WTC11 (cell line): ENCODE measurements at regions of chr14 and their contacts with region 1.

Region 1: DNA sequence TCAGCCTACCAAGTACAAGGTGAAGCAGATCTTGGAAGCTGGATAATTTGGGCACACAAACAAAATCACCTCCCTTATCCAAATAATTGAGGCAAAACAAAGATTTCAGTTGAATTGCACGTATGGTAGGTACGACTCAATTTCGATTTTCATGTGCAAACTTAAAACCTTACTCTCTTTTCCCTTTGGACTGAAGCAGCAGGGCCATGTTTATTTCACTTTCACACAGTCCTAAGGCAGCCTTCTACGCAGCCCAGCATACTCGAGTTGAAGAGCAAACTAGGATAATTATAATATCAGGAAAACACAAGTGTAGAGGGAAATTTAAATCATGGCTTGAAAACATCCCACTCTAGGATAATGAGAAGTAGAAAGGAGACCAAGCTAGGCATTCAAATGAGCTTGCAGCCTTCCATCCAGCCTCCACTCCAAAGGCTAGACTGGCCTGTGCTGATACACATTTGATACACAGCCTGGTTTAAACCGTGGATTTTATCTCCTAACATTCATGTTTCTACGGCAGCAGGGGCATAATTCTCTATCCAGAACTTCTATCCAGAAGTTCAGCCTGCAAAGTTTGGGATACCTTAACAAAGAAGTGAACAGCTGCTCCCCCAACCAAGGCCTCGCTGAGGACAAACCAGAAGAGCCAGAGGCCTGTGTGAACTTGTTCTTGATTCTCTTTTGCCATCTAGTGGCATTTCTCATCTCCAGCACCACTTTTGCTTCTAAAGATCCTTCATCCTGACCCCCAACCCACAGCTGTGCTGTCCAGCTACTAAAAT is 2.4 kb upstream of the RNASE7 start:
- DNase-seq: peak; percentile 33
- ATAC-seq: peak; percentile 74
- H3K4me3 Mint-ChIP-seq: peak overlapping the region; percentile 25
- H3K27ac Mint-ChIP-seq: peak overlapping the region; percentile 72; the same call in 1 of the 2 replicates
- H3K4me1 Mint-ChIP-seq: peaks cover 26% of the 10 kb centered on the region
- H3K27me3 Mint-ChIP-seq: peaks cover 3% of the 10 kb centered on the region; the same call in 1 of the 2 replicates
- CTCF ChIP-seq: 0 out of 2 replicates have a peak, but pooled peaks have one; percentile 25

Region 2: GRCh38 chr14:20757965-20758364 is 281.8 kb before region 1 on chr14:
- CTCF ChIA-PET with region 1: interaction called, 12 read pairs
- POLR2A ChIA-PET with region 1: no interaction called
- DNase-seq: peak; percentile 57
- ATAC-seq: peak; percentile 76
- H3K4me3 Mint-ChIP-seq: no peak overlapping the region
- H3K27ac Mint-ChIP-seq: no peak overlapping the region
- H3K4me1 Mint-ChIP-seq: peaks cover 26% of the 10 kb centered on the region
- H3K27me3 Mint-ChIP-seq: peaks cover 4% of the 10 kb centered on the region
- CTCF ChIP-seq: 0 out of 2 replicates have a peak, but pooled peaks have one; percentile 28

Region 3: GRCh38 chr14:20998664-20999366 is 41.0 kb before region 1 on chr14 and contains the start of gene SLC39A2:
- CTCF ChIA-PET with region 1: interaction called, 37 read pairs
- POLR2A ChIA-PET with region 1: no interaction called
- DNase-seq: peak; percentile 63
- ATAC-seq: peak; percentile 90
- H3K4me3 Mint-ChIP-seq: peak within 1 kb of the TSS; percentile 32
- H3K27ac Mint-ChIP-seq: peak within 1 kb of the TSS; percentile 55
- H3K4me1 Mint-ChIP-seq: peaks cover 18% of the 10 kb centered on the region
- H3K27me3 Mint-ChIP-seq: no peaks in the 10 kb centered on the region; the same call in 1 of the 2 replicates
- CTCF ChIP-seq: no peak
- total RNA-seq, gene SLC39A2: 0.14 TPM in 1 of 3 replicates, not detected in the others

Region 4: GRCh38 chr14:21024585-21025370 is 15.0 kb before region 1 on chr14 and contains the start of gene NDRG2:
- CTCF ChIA-PET with region 1: interaction called, 41 read pairs
- POLR2A ChIA-PET with region 1: interaction called, 7 read pairs
- DNase-seq: peak; percentile 92
- ATAC-seq: peak; percentile 74
- H3K4me3 Mint-ChIP-seq: peak within 1 kb of the TSS; percentile 93
- H3K27ac Mint-ChIP-seq: peak within 1 kb of the TSS; percentile 99
- H3K4me1 Mint-ChIP-seq: peaks cover 39% of the 10 kb centered on the region
- H3K27me3 Mint-ChIP-seq: peaks cover 35% of the 10 kb centered on the region
- CTCF ChIP-seq: no peak
- total RNA-seq, gene NDRG2: 28.5 to 32.2 TPM (median 30.1 TPM) in 3 replicates

Region 5: GRCh38 chr14:21071225-21072030 is 31.7 kb after region 1 on chr14:
- CTCF ChIA-PET with region 1: interaction called, 45 read pairs
- POLR2A ChIA-PET with region 1: interaction called, 4 read pairs
- DNase-seq: peak; percentile 88
- ATAC-seq: peak; percentile 46
- H3K4me3 Mint-ChIP-seq: peak overlapping the region; percentile 89
- H3K27ac Mint-ChIP-seq: peak overlapping the region; percentile 80
- H3K4me1 Mint-ChIP-seq: peaks cover 33% of the 10 kb centered on the region
- H3K27me3 Mint-ChIP-seq: peaks cover 4% of the 10 kb centered on the region; the same call in 1 of the 2 replicates
- CTCF ChIP-seq: no peak

Region 6: GRCh38 chr14:21103710-21104447 is 64.1 kb after region 1 on chr14:
- CTCF ChIA-PET with region 1: interaction called, 21 read pairs
- POLR2A ChIA-PET with region 1: interaction called, 3 read pairs
- DNase-seq: peak; percentile 96
- ATAC-seq: peak; percentile 79
- H3K4me3 Mint-ChIP-seq: peak overlapping the region; percentile 93
- H3K27ac Mint-ChIP-seq: peak overlapping the region; percentile 87
- H3K4me1 Mint-ChIP-seq: peaks cover 73% of the 10 kb centered on the region
- H3K27me3 Mint-ChIP-seq: no peaks in the 10 kb centered on the region
- CTCF ChIP-seq: peak; percentile 24; the same call in 1 of the 2 replicates